IMR-90 (cell line): ENCODE measurements at regions of chr9 and their contacts with region 1.

Region 1: GRCh38 chr9:91395106-91395552 is 28.5 kb downstream of the NFIL3 start:
- DNase-seq: peak; percentile 53
- ATAC-seq: no peak; the same call in 1 of the 2 replicates
- H3K4me3 ChIP-seq: no peak overlapping the region
- H3K27ac ChIP-seq: peak overlapping the region; percentile 84
- H3K4me1 ChIP-seq: peaks cover 9% of the 10 kb centered on the region
- H3K27me3 ChIP-seq: no peaks in the 10 kb centered on the region
- CTCF ChIP-seq: no peak
- POLR2A ChIP-seq: no peak
- RAD21 ChIP-seq: no peak

Region 2: GRCh38 chr9:90966480-90967144 is 428.5 kb before region 1 on chr9:
- CTCF ChIA-PET with region 1: no interaction called
- POLR2A ChIA-PET with region 1: interaction called, 13 read pairs
- dilution Hi-C with region 1: no loop called
- in situ Hi-C with region 1: no loop called
- intact Hi-C with region 1: no loop called
- DNase-seq: peak; percentile 49
- ATAC-seq: peak; percentile 27; the same call in 1 of the 2 replicates
- H3K4me3 ChIP-seq: no peak overlapping the region
- H3K27ac ChIP-seq: no peak overlapping the region
- H3K4me1 ChIP-seq: peaks cover 8% of the 10 kb centered on the region
- H3K27me3 ChIP-seq: no peaks in the 10 kb centered on the region
- CTCF ChIP-seq: no peak
- POLR2A ChIP-seq: no peak
- RAD21 ChIP-seq: no peak

Region 3: GRCh38 chr9:91341239-91341746 is 53.8 kb before region 1 on chr9:
- CTCF ChIA-PET with region 1: no interaction called
- POLR2A ChIA-PET with region 1: no interaction called
- dilution Hi-C with region 1: no loop called
- in situ Hi-C with region 1: no loop called
- intact Hi-C with region 1: no loop called
- DNase-seq: no peak
- ATAC-seq: no peak
- H3K4me3 ChIP-seq: no peak overlapping the region
- H3K27ac ChIP-seq: no peak overlapping the region
- H3K4me1 ChIP-seq: no peaks in the 10 kb centered on the region
- H3K27me3 ChIP-seq: no peaks in the 10 kb centered on the region
- CTCF ChIP-seq: no peak
- POLR2A ChIP-seq: no peak
- RAD21 ChIP-seq: no peak

Region 4: DNA sequence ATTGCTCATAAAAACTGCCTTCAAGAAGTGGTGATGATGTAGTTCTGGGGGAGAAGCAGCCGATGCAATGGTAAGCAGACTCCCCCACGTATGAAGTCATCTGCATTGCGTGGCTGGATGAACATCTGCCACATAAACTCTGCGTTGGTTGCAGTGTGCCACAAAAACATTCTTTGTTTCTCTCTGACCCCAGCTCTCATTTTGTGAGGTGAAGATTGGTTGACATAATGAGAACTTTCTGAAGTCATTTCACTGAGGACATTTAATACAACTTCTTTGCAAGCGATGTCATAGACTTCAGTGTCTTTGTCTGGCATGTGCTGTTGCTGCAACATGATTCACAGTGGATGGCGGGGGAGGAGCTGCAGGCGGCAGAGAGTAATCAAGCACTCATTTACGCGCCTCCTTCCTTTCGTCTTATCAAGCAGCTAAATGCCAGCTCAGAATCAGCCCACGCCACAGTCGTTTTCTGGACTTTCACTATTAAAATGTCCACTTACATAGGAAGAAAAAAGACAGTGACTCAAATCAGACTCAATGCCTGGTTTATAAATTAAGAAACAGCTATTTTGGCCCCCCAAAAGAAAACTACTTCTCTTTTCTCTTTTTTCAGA is 120.1 kb after region 1 on chr9:
- CTCF ChIA-PET with region 1: no interaction called
- POLR2A ChIA-PET with region 1: no interaction called
- dilution Hi-C with region 1: no loop called
- in situ Hi-C with region 1: no loop called
- intact Hi-C with region 1: no loop called
- DNase-seq: peak; percentile 96
- ATAC-seq: peak; percentile 95
- H3K4me3 ChIP-seq: peak overlapping the region; percentile 19; the same call in 1 of the 2 replicates
- H3K27ac ChIP-seq: peak overlapping the region; percentile 61
- H3K4me1 ChIP-seq: no peaks in the 10 kb centered on the region
- H3K27me3 ChIP-seq: no peaks in the 10 kb centered on the region
- CTCF ChIP-seq: no peak
- POLR2A ChIP-seq: peak; percentile 33; the same call in 1 of the 2 replicates
- RAD21 ChIP-seq: no peak; the same call in 1 of the 2 replicates